ENCODE measurements at regions of chr3 and their contacts with region 1.

Region 1: DNA sequence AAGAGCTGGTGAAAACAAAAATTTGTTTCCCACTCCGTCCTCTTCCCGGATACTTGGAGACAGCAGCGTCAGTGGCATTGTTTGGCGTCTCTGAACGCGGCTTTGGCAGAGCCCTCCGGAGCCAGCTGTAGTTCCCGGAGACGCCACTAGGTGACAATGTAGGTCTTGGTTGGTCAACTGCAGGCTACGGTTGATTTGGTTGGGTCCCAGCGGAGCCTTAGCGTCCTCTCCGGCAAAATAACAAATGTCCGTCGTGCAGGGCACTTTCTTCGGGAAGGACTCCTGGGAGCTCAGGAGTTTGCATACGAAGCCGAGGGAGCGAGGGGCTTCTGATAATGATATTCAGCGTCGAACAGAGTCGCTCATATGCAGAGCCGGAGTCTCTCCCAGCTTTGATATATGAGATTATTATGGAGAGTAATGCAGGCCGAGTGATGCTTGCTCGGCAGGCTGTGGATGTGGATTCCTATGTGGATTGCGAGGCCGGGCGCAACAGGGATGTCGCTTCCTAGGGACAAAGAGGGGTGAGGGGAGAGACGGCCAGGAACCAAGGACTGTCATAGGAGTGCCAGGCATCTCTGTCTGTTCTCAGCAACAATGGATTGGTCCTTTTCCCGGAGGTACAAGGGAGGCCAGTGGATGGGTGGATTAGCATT is 74.8 kb downstream of the IL20RB start:
- DNase-seq: peak; percentile 90

Region 2: GRCh38 chr3:136960836-136961518 is 71.6 kb before region 1 on chr3:
- intact Hi-C with region 1: no loop called
- DNase-seq: no peak

Region 3: DNA sequence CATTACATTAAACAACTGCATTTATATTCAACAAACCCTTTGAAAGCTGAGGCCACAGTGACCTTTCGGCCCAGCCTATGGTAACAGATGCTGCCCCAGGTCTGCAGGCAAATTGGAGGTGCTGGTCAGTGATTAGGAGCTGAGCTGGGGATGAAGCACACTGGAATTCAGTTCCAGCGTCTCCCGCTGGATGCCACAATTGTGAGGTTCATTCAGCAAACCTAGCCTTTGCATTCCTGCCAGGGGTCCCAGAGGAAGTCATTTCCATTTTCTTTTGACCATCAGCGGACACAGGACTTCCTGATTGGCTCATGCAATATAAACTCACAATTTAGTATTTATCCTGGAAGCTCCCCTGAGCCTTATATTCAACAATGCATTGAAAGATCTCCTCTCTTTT is 14.6 kb after region 1 on chr3:
- intact Hi-C with region 1: no loop called
- DNase-seq: no peak

Region 4: DNA sequence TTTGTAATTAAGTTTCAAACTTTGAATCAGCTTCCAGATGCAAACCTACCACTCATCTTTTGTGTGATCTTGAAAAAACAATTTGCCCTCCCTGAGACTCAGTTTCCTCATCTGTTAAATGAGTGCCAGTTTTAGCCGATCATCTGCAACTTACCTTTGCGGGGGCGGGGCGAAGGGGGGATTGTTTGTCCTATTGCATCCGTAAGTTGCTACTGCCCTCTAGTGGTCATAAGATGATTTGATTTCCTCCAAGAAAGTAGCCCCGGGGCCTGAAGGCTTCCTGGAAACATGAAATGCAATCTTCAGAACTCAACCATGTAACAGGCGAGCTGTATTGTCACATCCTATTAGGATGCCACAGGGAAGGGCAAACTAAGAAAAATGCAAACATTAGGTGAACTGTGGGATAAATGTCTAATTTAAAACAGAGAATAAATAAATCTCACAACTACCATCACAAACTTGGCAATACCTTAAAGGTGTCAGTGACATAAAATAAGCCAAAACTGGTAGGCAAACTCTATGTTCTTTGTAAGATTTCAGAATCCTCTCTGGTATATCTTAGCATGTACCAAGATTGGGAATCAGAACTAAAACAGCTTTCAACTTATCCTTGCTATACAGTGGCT is 913.9 kb after region 1 on chr3:
- intact Hi-C with region 1: loop called (anchors 10 kb)
- DNase-seq: no peak

Region 5: GRCh38 chr3:137970914-137971831 is 938.6 kb after region 1 on chr3:
- intact Hi-C with region 1: loop called (anchors 10 kb)
- DNase-seq: peak; percentile 84